Ascending aorta (tissue), 2 donors: ENCODE measurements at regions of chr10 and their contacts with region 1.

Region 1: GRCh38 chr10:15433850-15434537 is 62.9 kb upstream of the FAM171A1 start:
- DNase-seq: no peak
- H3K4me3 ChIP-seq: peak overlapping the region in 1 of 2 donors; percentile 57
- H3K27ac ChIP-seq: peak overlapping the region; percentile 63 to 69
- H3K4me1 ChIP-seq: peaks cover 4 to 14% of the 10 kb centered on the region in 2 donors
- H3K27me3 ChIP-seq: no peaks in the 10 kb centered on the region
- CTCF ChIP-seq: peak; percentile 38 to 73 (median 69)

Region 2: GRCh38 chr10:15579605-15580004 is 145.6 kb after region 1 on chr10:
- intact Hi-C with region 1: loop called (anchors 5 kb)
- DNase-seq: no peak
- H3K4me3 ChIP-seq: no peak overlapping the region
- H3K27ac ChIP-seq: peak overlapping the region in 1 of 2 donors; percentile 57
- H3K4me1 ChIP-seq: peaks cover 0 to 10% of the 10 kb centered on the region in 2 donors
- H3K27me3 ChIP-seq: no peaks in the 10 kb centered on the region
- CTCF ChIP-seq: no peak

Region 3: DNA sequence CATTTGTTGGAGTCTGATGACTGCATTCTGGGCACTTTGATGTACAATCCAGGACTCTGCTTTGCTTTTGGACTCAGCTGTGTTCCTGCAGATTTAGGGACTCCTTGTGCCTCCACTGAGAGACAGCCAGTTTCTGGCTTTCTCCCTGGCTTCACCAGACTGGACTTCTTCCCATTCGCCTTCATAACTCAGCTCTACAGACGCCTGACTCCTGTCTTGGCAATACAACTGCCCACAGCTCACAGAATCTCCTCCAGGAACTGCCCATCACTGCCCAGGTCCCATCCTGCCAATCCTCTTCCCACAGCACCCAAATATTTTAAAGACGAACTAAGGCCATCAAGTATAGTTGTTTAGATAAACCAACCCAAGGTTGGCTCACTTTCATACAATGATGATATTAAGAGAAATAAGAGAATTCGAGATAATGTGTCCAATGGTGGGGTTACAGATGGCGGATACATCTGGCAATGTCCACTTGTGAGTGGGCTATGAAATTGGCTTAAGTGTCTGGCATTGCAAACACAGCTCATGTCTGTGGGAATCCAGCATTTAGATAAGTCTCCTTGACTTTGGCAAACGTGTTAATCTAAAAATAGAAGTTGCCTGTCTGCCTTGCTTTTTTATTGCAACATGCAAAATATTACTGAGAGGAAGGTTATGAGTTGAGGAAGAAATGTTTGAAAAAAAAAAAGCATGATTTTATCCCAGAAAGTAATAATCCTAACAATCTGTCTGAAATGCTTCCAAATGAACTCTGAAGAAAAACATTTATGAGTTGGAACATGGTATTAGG is 190.6 kb after region 1 on chr10:
- intact Hi-C with region 1: loop called (anchors 10 kb)
- DNase-seq: peak; percentile 23 to 72
- H3K4me3 ChIP-seq: no peak overlapping the region
- H3K27ac ChIP-seq: peak overlapping the region; percentile 76 to 77
- H3K4me1 ChIP-seq: peaks cover 6 to 66% of the 10 kb centered on the region in 2 donors
- H3K27me3 ChIP-seq: no peaks in the 10 kb centered on the region
- CTCF ChIP-seq: no peak

Region 4: DNA sequence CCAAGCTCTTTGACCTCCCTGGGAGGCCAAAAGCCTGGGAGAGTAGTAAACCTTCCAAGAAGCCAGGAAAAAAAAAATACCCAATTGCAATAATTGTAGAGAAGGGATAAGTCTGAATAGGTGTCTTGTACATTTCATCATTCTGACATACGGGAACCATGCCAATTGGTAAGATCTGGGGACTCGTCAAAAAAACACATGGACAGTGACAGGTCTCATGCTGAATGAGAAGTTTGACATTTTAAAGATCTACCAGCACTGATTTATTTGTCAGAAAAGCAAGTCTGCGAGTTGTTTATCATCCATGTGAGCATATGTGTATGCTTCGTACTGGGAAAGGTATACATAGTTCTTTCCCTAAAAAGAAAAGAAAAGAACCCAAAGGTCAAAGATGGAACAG is 289.8 kb after region 1 on chr10:
- intact Hi-C with region 1: no loop called
- DNase-seq: no peak
- H3K4me3 ChIP-seq: peak overlapping the region in 1 of 2 donors; percentile 27
- H3K27ac ChIP-seq: peak overlapping the region; percentile 91 to 95
- H3K4me1 ChIP-seq: peaks cover 7 to 35% of the 10 kb centered on the region in 2 donors
- H3K27me3 ChIP-seq: no peaks in the 10 kb centered on the region
- CTCF ChIP-seq: no peak